Tibial artery (tissue), 4 donors: ENCODE measurements at regions of chr22 and their contacts with region 1.

Region 1: GRCh38 chr22:28051787-28052356 is 132.8 kb upstream of the PITPNB start:
- DNase-seq: peak; percentile 64 to 82
- H3K4me3 ChIP-seq: no peak overlapping the region
- H3K27ac ChIP-seq: no peak overlapping the region
- H3K4me1 ChIP-seq: peaks cover 0 to 8% (median 0%) of the 10 kb centered on the region in 4 donors
- H3K27me3 ChIP-seq: no peaks in the 10 kb centered on the region
- CTCF ChIP-seq: peak; percentile 84 to 88

Region 2: GRCh38 chr22:28442264-28442710 is 390.4 kb after region 1 on chr22:
- intact Hi-C with region 1: loop called (anchors 10 kb)
- DNase-seq: peak; percentile 62 to 85
- H3K4me3 ChIP-seq: peak overlapping the region; percentile 60 to 64
- H3K27ac ChIP-seq: peak overlapping the region; percentile 80 to 86
- H3K4me1 ChIP-seq: peaks cover 0 to 68% (median 21%) of the 10 kb centered on the region in 4 donors
- H3K27me3 ChIP-seq: no peaks in the 10 kb centered on the region
- CTCF ChIP-seq: peak; percentile 58 to 59

Region 3: GRCh38 chr22:28594797-28595462 is 543.1 kb after region 1 on chr22:
- intact Hi-C with region 1: loop called (anchors 2 kb)
- DNase-seq: no peak
- H3K4me3 ChIP-seq: no peak overlapping the region
- H3K27ac ChIP-seq: no peak overlapping the region
- H3K4me1 ChIP-seq: no peaks in the 10 kb centered on the region
- H3K27me3 ChIP-seq: no peaks in the 10 kb centered on the region
- CTCF ChIP-seq: peak; percentile 76 to 95

Region 4: DNA sequence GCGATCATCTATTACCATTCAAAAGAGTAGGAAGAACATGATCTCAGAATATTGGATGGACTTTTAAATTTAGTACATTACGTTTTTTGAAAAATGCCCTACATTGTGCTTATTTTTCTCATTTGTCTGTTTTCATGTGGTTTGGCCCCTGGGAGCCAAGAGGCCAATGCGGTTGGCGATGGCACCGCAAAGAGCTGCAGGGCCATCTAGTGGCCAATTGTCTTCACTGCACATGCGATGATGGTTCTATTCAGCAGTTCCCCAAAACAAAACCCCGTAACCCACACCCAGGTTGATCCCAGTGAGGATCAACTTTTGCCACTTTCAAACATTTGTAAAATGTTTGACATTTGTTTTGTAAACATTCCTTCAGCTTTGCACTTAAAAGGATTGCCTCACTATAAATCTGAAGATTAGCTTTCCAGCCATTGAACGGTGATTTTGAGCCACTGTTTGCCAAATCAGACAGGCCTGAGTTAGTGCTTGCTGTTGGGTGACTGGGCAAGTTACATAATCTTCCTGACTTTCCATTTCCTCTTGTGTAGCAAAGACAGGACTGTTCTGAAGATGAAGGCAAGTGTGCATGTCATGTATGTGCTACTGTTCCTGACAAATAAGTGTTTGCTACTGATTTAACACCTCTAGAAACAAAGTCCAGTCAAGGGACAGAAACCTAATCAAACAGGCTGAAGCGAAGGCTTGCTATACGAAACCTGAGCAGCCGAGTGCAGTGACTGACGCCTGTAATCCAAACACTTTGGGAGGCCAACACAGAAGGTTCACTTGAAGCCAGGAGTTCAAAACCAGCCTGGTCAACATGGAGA is 777.7 kb after region 1 on chr22:
- intact Hi-C with region 1: loop called (anchors 10 kb)
- DNase-seq: peak; percentile 80 to 81
- H3K4me3 ChIP-seq: no peak overlapping the region
- H3K27ac ChIP-seq: no peak overlapping the region
- H3K4me1 ChIP-seq: peaks cover 0 to 8% (median 3%) of the 10 kb centered on the region in 4 donors
- H3K27me3 ChIP-seq: no peaks in the 10 kb centered on the region
- CTCF ChIP-seq: peak; percentile 97 to 98